ENCODE measurements at regions of chr11 and their contacts with region 1.

Region 1: GRCh38 chr11:1694064-1694845 is 2.7 kb upstream of the KRTAP5-6 start:
- DNase-seq: peak; percentile 92

Region 2: GRCh38 chr11:1652771-1653540 is 41.3 kb before region 1 on chr11:
- CTCF ChIA-PET with region 1: interaction called, 17 read pairs
- POLR2A ChIA-PET with region 1: interaction called, 4 read pairs
- DNase-seq: peak; percentile 90

Region 3: GRCh38 chr11:1832211-1832919 is 138.1 kb after region 1 on chr11:
- CTCF ChIA-PET with region 1: interaction called, 77 read pairs
- POLR2A ChIA-PET with region 1: interaction called, 30 read pairs
- DNase-seq: peak; percentile 81

Region 4: DNA sequence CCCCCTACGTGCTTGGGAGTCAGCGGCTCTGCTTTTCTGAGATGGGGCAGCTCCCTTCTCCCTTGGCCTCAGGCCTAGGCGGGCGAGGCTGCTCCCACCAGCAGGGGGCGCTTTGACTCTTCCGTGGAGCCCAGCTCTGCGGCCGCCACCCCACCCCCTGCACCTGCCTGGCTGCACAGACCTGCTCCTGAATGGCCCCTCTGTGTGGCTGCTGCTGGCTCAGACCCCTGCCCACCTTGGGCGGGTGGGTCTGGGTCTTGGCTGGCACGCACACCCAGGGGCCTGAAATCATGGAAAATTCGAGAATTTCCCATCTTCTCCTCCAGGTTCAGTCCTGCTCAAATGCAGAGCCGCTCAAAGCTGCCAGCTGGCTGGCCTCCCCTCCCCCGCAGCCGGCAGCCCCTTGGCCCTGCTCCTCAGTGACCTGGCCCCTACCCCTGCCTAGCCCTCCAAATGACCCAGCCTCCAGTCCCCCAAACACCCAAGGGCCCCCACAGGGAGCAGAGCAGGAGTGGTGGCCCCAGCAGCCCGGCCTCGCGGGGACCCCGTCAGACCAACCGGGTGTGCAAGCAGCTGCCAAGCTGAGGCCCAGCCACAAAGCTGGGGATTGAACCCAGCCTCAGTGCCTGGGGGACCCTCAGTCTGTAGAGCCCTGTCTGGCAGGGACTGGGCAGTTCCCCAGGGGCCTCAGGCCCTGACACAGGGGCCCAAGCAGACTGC is 188.4 kb after region 1 on chr11:
- CTCF ChIA-PET with region 1: interaction called, 10 read pairs
- POLR2A ChIA-PET with region 1: no interaction called
- DNase-seq: peak; percentile 89